CD8-positive, alpha-beta T cell (primary cell): ENCODE measurements at regions of chr5 and their contacts with region 1.

Region 1: DNA sequence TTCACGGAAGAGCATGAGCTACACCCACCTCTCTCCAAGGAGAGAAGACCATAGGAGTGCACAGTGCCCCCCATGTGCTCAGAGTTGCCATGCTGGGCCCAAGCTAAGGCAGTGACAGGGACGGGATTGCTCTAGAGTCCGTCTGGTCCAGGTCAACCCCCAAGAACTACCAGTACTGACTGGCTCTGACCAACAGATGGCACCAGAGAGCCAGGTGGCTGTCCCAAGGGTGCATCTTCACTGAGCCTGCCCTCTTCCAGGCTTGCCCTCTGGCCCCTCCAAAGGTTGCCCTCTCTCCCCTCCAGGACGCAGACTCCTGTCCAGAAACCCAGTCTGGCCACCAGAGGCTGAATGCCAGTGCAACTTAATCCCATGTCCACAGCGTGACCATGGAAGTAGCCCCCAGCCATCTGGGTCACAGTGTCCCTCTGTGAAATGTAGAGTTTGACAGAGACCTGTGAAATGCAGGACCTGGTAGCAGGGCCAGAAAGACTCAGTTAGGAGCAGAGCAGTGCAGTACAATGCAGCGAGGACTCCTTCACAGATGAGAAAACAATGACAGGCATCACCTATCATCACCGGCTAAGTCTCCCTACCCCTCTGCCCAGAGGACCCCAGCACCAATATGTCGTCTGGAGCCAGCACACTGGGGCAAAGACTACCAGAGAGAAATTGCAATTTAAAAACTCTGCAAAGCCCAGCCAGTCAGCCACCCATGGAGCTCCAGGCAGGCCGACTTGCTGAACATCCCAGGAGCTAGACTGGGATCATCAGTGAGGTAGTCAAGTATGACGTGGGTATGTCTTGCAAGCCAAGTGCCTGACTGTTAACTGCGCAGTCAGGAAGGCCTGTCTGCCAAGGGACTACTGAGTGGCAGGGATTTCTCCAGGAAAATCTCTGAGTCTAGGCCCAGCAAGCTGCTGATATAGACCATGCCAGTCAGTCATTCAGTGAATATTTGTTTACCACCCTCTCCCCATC is 7.7 kb upstream of the SKP1 start:
- DNase-seq: peak; percentile 62 to 84 (median 77)
- ATAC-seq: peak; percentile 98
- H3K4me3 ChIP-seq: no peak overlapping the region
- H3K4me3 Mint-ChIP-seq: no peak overlapping the region
- H3K27ac ChIP-seq: no peak overlapping the region
- H3K27ac Mint-ChIP-seq: no peak overlapping the region
- H3K4me1 ChIP-seq: peaks cover 4% of the 10 kb centered on the region
- H3K4me1 Mint-ChIP-seq: no peaks in the 10 kb centered on the region
- H3K27me3 ChIP-seq: no peaks in the 10 kb centered on the region
- H3K27me3 Mint-ChIP-seq: no peaks in the 10 kb centered on the region
- CTCF ChIP-seq: peak; percentile 84

Region 2: DNA sequence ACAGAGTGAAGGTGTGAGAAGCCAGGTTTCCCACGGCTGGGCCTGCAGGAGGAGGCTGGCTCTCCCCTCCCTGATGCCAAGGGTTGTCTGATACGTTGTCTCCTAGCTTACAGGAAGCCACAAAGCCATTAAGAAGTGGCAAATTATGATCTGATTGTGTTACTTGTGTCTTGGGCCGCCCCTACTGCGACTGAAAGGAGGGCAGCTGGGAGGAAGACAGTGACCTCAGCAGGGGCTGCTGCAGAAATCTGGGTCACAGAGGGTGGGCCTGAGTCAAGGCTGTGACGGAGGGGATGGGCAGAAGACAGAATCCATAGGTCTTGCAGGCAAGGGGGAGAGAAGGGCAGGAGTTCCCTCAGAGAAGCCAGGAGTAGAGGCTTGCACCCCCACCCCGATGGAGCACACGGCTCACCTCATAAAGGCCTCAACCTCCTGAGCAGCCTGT is 717.1 kb before region 1 on chr5:
- CTCF ChIA-PET with region 1: no interaction called
- POLR2A ChIA-PET with region 1: no interaction called
- intact Hi-C with region 1: no loop called
- DNase-seq: peak in 7 of 9 experiments; percentile 5 to 58 (median 22)
- ATAC-seq: peak; percentile 79
- H3K4me3 ChIP-seq: no peak overlapping the region
- H3K4me3 Mint-ChIP-seq: no peak overlapping the region
- H3K27ac ChIP-seq: peak overlapping the region in 1 of 2 experiments; percentile 3
- H3K27ac Mint-ChIP-seq: no peak overlapping the region
- H3K4me1 ChIP-seq: peaks cover 13% of the 10 kb centered on the region
- H3K4me1 Mint-ChIP-seq: peaks cover 6% of the 10 kb centered on the region
- H3K27me3 ChIP-seq: no peaks in the 10 kb centered on the region
- H3K27me3 Mint-ChIP-seq: peaks cover 6% of the 10 kb centered on the region
- CTCF ChIP-seq: no peak

Region 3: GRCh38 chr5:134289509-134290113 is 105.2 kb after region 1 on chr5:
- CTCF ChIA-PET with region 1: interaction called, 164 read pairs
- POLR2A ChIA-PET with region 1: no interaction called
- intact Hi-C with region 1: loop called (anchors 1 kb)
- DNase-seq: peak in 8 of 9 experiments; percentile 14 to 77 (median 40)
- ATAC-seq: peak; percentile 72
- H3K4me3 ChIP-seq: no peak overlapping the region
- H3K4me3 Mint-ChIP-seq: no peak overlapping the region
- H3K27ac ChIP-seq: no peak overlapping the region
- H3K27ac Mint-ChIP-seq: no peak overlapping the region
- H3K4me1 ChIP-seq: no peaks in the 10 kb centered on the region
- H3K4me1 Mint-ChIP-seq: no peaks in the 10 kb centered on the region
- H3K27me3 ChIP-seq: no peaks in the 10 kb centered on the region
- H3K27me3 Mint-ChIP-seq: peaks cover 2% of the 10 kb centered on the region
- CTCF ChIP-seq: peak; percentile 59

Region 4: GRCh38 chr5:134477462-134478250 is 293.2 kb after region 1 on chr5:
- CTCF ChIA-PET with region 1: no interaction called
- POLR2A ChIA-PET with region 1: no interaction called
- intact Hi-C with region 1: no loop called
- DNase-seq: no peak
- ATAC-seq: no peak
- H3K4me3 ChIP-seq: no peak overlapping the region
- H3K4me3 Mint-ChIP-seq: no peak overlapping the region
- H3K27ac ChIP-seq: no peak overlapping the region
- H3K27ac Mint-ChIP-seq: no peak overlapping the region
- H3K4me1 ChIP-seq: no peaks in the 10 kb centered on the region
- H3K4me1 Mint-ChIP-seq: no peaks in the 10 kb centered on the region
- H3K27me3 ChIP-seq: no peaks in the 10 kb centered on the region
- H3K27me3 Mint-ChIP-seq: no peaks in the 10 kb centered on the region
- CTCF ChIP-seq: no peak